HCT116 (cell line): ENCODE measurements at regions of chr9 and their contacts with region 1.

Region 1: DNA sequence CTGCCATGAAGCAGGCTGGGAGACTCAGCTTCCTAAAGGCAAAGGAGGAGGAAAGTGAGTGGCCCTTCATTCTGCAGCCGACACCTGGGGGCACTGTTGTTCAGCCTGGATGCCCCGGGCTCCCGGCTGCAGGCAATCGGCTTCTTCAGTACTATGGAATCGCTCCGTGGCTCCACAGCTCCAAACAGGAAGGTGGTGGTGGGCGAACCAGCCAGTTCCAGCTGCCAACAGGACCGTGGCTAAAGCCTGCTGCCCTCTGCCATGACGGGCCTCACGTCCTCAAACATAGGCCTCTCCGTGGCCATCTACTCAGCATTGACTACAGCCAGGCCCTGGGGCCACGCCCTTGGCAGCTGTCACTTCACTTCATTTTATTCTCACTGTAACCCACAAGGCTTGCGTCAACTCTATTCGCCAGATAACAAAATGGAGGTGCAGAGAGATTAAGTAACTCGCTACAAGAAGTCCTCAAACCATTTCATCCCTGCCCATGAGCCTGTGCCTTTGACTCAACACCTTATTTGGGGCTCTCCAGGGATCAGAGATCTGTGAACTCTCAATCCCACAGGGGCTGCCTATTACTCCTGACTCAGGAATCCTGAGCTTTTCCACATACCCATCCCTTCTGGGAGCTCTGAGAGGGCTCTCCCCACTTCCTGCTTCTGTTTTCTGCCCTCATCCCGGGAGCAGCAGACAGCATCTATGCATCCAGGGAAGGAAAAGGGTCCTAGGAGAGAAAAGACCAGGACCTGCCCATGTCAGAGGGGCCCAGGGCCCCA is 38.0 kb downstream of the PAX5 start:
- DNase-seq: peak; percentile 32
- ATAC-seq: peak; percentile 93
- H3K4me3 ChIP-seq: peak overlapping the region in 1 of 2 experiments; percentile 21; a peak in 2 of 4 replicates
- H3K27ac ChIP-seq: no peak overlapping the region
- H3K4me1 ChIP-seq: peaks cover 0 to 5% of the 10 kb centered on the region in 2 experiments; a peak in 2 of 4 replicates
- H3K27me3 ChIP-seq: no peaks in the 10 kb centered on the region
- CTCF ChIP-seq: peak; percentile 79 to 86 (median 83)
- POLR2A ChIP-seq: no peak
- RAD21 ChIP-seq: peak; percentile 94

Region 2: GRCh38 chr9:36632892-36633291 is 363.2 kb before region 1 on chr9:
- CTCF ChIA-PET with region 1: no interaction called
- POLR2A ChIA-PET with region 1: no interaction called
- RAD21 ChIA-PET with region 1: no interaction called
- intact Hi-C with region 1: loop called (anchors 5 kb)
- DNase-seq: peak; percentile 7
- ATAC-seq: peak; percentile 70
- H3K4me3 ChIP-seq: no peak overlapping the region
- H3K27ac ChIP-seq: no peak overlapping the region
- H3K4me1 ChIP-seq: no peaks in the 10 kb centered on the region
- H3K27me3 ChIP-seq: no peaks in the 10 kb centered on the region
- CTCF ChIP-seq: peak; percentile 43 to 72 (median 47); a peak in 5 of 6 replicates
- POLR2A ChIP-seq: no peak
- RAD21 ChIP-seq: peak; percentile 58

Region 3: GRCh38 chr9:36980148-36980974 is 15.8 kb before region 1 on chr9:
- CTCF ChIA-PET with region 1: interaction called, 12 read pairs
- POLR2A ChIA-PET with region 1: no interaction called
- RAD21 ChIA-PET with region 1: interaction called in 1 of 2 experiments, 3 read pairs
- intact Hi-C with region 1: no loop called
- DNase-seq: peak; percentile 19
- ATAC-seq: peak; percentile 88
- H3K4me3 ChIP-seq: peak overlapping the region in 1 of 2 experiments; percentile 8; a peak in 1 of 4 replicates
- H3K27ac ChIP-seq: no peak overlapping the region
- H3K4me1 ChIP-seq: peaks cover 11 to 28% of the 10 kb centered on the region in 2 experiments
- H3K27me3 ChIP-seq: no peaks in the 10 kb centered on the region
- CTCF ChIP-seq: peak; percentile 41 to 54 (median 52); a peak in 5 of 6 replicates
- POLR2A ChIP-seq: no peak
- RAD21 ChIP-seq: peak; percentile 57

Region 4: DNA sequence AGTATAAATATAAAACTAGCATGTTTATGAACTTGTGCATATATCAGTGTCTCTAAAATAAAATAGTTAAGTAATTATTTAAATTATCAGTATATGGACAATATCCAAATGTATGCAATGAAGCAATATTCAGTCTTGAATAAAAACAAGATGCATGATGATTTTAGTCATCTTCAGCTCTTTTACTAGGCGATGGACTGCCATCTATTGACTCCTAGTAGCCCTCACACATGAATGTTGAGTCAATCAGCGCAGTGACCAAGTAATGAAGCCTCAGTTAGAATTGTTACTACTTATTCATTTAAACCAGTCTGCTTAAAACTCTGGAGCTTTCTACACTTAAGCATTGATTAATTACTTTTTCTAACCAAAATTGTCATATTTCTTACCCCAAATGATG is 333.5 kb after region 1 on chr9:
- CTCF ChIA-PET with region 1: interaction called, 37 read pairs
- POLR2A ChIA-PET with region 1: interaction called, 3 read pairs
- RAD21 ChIA-PET with region 1: interaction called, 3 to 6 read pairs
- intact Hi-C with region 1: loop called (anchors 1 kb)
- DNase-seq: no peak
- ATAC-seq: no peak; the same call in 1 of the 2 replicates
- H3K4me3 ChIP-seq: no peak overlapping the region
- H3K27ac ChIP-seq: no peak overlapping the region
- H3K4me1 ChIP-seq: no peaks in the 10 kb centered on the region
- H3K27me3 ChIP-seq: no peaks in the 10 kb centered on the region
- CTCF ChIP-seq: peak; percentile 9 to 34 (median 14); a peak in 3 of 6 replicates
- POLR2A ChIP-seq: no peak
- RAD21 ChIP-seq: peak; percentile 55

Region 5: GRCh38 chr9:37390759-37391158 is 394.6 kb after region 1 on chr9:
- CTCF ChIA-PET with region 1: interaction called, 4 read pairs
- POLR2A ChIA-PET with region 1: no interaction called
- RAD21 ChIA-PET with region 1: no interaction called
- intact Hi-C with region 1: loop called (anchors 2 kb)
- DNase-seq: peak; percentile 26
- ATAC-seq: peak; percentile 86
- H3K4me3 ChIP-seq: no peak overlapping the region
- H3K27ac ChIP-seq: no peak overlapping the region
- H3K4me1 ChIP-seq: peaks cover 0 to 5% of the 10 kb centered on the region in 2 experiments; a peak in 1 of 4 replicates
- H3K27me3 ChIP-seq: no peaks in the 10 kb centered on the region
- CTCF ChIP-seq: peak; percentile 44 to 83 (median 77); a peak in 5 of 6 replicates
- POLR2A ChIP-seq: no peak
- RAD21 ChIP-seq: peak; percentile 65